Activated CD4-positive, alpha-beta memory T cell treated with anti-CD3 and anti-CD28 coated beads for 36 hours (primary cell): ENCODE measurements at regions of chr13 and their contacts with region 1.

Region 1: GRCh38 chr13:44435142-44435982 is 61.7 kb downstream of the SERP2 start:
- DNase-seq: peak; percentile 93
- H3K4me3 Mint-ChIP-seq: peak overlapping the region; percentile 64
- H3K27ac Mint-ChIP-seq: peak overlapping the region; percentile 39
- H3K4me1 Mint-ChIP-seq: peaks cover 17% of the 10 kb centered on the region
- H3K27me3 Mint-ChIP-seq: peaks cover 9% of the 10 kb centered on the region

Region 2: GRCh38 chr13:44050450-44051063 is 384.8 kb before region 1 on chr13:
- CTCF ChIA-PET with region 1: interaction called, 21 read pairs
- POLR2A ChIA-PET with region 1: no interaction called
- intact Hi-C with region 1: loop called (anchors 1 kb)
- DNase-seq: no peak
- H3K4me3 Mint-ChIP-seq: no peak overlapping the region
- H3K27ac Mint-ChIP-seq: no peak overlapping the region
- H3K4me1 Mint-ChIP-seq: peaks cover 4% of the 10 kb centered on the region
- H3K27me3 Mint-ChIP-seq: peaks cover 36% of the 10 kb centered on the region

Region 3: GRCh38 chr13:44191504-44192171 is 243.7 kb before region 1 on chr13:
- CTCF ChIA-PET with region 1: interaction called, 66 read pairs
- POLR2A ChIA-PET with region 1: no interaction called
- intact Hi-C with region 1: loop called (anchors 1 kb)
- DNase-seq: peak; percentile 56
- H3K4me3 Mint-ChIP-seq: no peak overlapping the region
- H3K27ac Mint-ChIP-seq: no peak overlapping the region
- H3K4me1 Mint-ChIP-seq: peaks cover 26% of the 10 kb centered on the region
- H3K27me3 Mint-ChIP-seq: peaks cover 16% of the 10 kb centered on the region

Region 4: GRCh38 chr13:44243198-44243857 is 192.0 kb before region 1 on chr13:
- CTCF ChIA-PET with region 1: interaction called, 4 read pairs
- POLR2A ChIA-PET with region 1: no interaction called
- intact Hi-C with region 1: loop called (anchors 5 kb)
- DNase-seq: peak; percentile 34
- H3K4me3 Mint-ChIP-seq: no peak overlapping the region
- H3K27ac Mint-ChIP-seq: no peak overlapping the region
- H3K4me1 Mint-ChIP-seq: no peaks in the 10 kb centered on the region
- H3K27me3 Mint-ChIP-seq: peaks cover 7% of the 10 kb centered on the region

Region 5: GRCh38 chr13:44274452-44275205 is 160.7 kb before region 1 on chr13:
- CTCF ChIA-PET with region 1: interaction called, 3 read pairs
- POLR2A ChIA-PET with region 1: no interaction called
- intact Hi-C with region 1: loop called (anchors 1 kb)
- DNase-seq: peak; percentile 19
- H3K4me3 Mint-ChIP-seq: peak overlapping the region; percentile 63
- H3K27ac Mint-ChIP-seq: peak overlapping the region; percentile 82
- H3K4me1 Mint-ChIP-seq: peaks cover 30% of the 10 kb centered on the region
- H3K27me3 Mint-ChIP-seq: peaks cover 3% of the 10 kb centered on the region

Region 6: DNA sequence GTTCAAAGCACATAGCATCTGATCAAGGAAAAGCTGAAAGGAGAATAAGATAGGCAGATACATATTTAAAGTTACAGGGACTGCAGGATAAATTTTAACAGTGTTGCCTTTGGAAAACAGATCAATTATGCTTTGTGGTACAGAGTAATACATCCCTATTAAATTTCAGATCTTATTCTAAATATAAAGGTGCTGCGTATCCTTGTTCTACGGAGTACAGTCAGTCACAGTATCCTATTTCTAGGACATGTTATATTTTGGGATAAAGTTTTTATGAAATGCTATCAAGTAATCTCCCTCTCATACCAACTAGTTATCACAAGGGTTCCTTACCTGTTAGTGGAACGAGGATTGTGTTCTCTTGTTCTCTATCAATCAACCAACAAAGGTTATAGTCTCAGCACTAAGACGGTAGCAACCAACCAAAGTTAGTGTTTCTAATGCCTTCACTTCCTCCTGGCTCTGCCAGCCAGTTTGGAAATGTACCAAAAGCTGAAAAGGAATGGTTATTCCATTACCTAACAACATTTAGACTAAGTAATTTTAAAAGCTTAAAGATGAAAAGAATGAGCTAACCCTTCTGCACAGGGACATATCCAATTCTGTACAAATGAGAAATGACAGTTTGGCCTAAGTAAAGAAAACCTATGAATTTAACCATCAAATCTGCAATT is 105.5 kb after region 1 on chr13:
- CTCF ChIA-PET with region 1: no interaction called
- POLR2A ChIA-PET with region 1: no interaction called
- intact Hi-C with region 1: no loop called
- DNase-seq: no peak
- H3K4me3 Mint-ChIP-seq: no peak overlapping the region
- H3K27ac Mint-ChIP-seq: no peak overlapping the region
- H3K4me1 Mint-ChIP-seq: peaks cover 6% of the 10 kb centered on the region
- H3K27me3 Mint-ChIP-seq: no peaks in the 10 kb centered on the region